ENCODE measurements at regions of chr16 and their contacts with region 1.

Region 1: DNA sequence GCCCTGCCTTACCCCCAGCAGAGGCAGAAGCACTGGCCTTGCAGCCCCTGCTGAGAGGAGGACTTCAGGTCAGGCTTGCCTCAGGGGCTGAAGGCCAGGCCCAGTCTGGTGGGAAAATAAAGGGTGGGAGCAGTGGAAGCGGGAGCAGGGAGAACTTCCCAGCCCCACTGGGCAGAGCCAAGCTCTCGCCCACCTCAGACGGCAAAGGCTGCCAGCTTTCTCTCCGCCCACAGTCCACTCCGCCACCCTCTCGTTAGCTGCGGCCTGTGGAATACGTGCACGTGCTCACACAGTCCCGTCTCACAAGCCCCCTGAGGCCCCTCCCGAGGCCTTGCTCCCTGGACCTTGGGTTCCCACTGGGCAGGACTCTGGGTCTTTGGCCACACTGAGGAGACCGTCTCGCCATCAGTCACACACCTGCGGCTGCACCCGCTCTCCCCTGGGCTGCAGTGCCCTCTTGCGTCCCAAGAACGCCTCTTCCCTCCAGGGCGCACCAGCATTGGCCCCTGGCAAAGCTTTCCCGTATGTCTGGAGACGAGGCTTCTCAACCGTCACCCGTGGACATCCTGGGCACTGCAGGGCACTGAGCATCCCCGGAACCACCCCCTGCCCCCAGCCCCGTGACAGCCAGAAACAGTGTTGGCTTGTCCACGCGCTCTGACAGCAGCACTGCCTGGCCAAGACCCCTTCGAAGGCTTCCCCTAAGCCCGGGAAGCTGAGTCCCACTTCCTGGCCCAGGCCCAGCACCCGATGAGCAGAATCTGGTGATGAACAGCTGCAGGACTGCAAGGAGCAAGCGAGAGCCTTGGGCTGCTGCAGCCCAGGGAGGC is 8.3 kb downstream of the MRPL28 start:
- DNase-seq: peak; percentile 73
- H3K4me3 ChIP-seq: peak overlapping the region in 1 of 3 experiments; percentile 20
- H3K27ac ChIP-seq: no peak overlapping the region
- H3K4me1 ChIP-seq: peaks cover 11% of the 10 kb centered on the region
- H3K27me3 ChIP-seq: no peaks in the 10 kb centered on the region
- CTCF ChIP-seq: peak; percentile 88 to 96

Region 2: GRCh38 chr16:106623-107324 is 255.3 kb before region 1 on chr16:
- CTCF ChIA-PET with region 1: no interaction called
- dilution Hi-C with region 1: no loop called
- in situ Hi-C with region 1: no loop called
- intact Hi-C with region 1: loop called (anchors 1 kb)
- DNase-seq: peak; percentile 53
- H3K4me3 ChIP-seq: no peak overlapping the region
- H3K27ac ChIP-seq: no peak overlapping the region
- H3K4me1 ChIP-seq: peaks cover 12% of the 10 kb centered on the region
- H3K27me3 ChIP-seq: no peaks in the 10 kb centered on the region
- CTCF ChIP-seq: peak; percentile 74 to 81

Region 3: DNA sequence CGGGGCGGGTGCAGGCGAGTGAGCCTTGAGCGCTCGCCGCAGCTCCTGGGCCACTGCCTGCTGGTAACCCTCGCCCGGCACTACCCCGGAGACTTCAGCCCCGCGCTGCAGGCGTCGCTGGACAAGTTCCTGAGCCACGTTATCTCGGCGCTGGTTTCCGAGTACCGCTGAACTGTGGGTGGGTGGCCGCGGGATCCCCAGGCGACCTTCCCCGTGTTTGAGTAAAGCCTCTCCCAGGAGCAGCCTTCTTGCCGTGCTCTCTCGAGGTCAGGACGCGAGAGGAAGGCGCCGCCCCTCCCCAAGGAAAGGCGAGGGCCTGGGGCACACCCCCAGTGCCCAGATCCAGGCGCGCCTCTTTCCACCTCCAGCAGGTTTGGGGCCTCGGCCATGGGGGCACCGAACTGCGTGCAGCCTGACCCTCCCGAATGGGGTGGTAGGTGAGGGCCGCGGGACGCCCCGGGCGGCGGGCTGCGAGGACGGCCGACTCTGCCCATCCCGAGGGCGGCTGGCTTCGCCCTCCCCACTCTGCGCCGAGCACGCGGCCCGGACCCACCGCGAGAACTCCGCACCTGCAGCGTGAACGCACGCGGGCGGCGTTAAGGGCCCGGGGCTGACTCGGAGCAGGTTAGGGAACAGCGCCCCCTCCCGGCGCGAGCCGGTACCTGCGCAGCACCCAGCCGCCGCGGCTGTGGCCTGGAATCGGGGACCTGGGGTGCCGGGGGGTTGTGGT is 181.0 kb before region 1 on chr16:
- CTCF ChIA-PET with region 1: no interaction called
- dilution Hi-C with region 1: no loop called
- in situ Hi-C with region 1: no loop called
- intact Hi-C with region 1: loop called (anchors 2 kb)
- DNase-seq: peak; percentile 57
- H3K4me3 ChIP-seq: peak overlapping the region in 2 of 3 experiments; percentile 20 to 33
- H3K27ac ChIP-seq: no peak overlapping the region
- H3K4me1 ChIP-seq: peaks cover 9% of the 10 kb centered on the region
- H3K27me3 ChIP-seq: peaks cover 7% of the 10 kb centered on the region
- CTCF ChIP-seq: peak; percentile 82 to 95

Region 4: DNA sequence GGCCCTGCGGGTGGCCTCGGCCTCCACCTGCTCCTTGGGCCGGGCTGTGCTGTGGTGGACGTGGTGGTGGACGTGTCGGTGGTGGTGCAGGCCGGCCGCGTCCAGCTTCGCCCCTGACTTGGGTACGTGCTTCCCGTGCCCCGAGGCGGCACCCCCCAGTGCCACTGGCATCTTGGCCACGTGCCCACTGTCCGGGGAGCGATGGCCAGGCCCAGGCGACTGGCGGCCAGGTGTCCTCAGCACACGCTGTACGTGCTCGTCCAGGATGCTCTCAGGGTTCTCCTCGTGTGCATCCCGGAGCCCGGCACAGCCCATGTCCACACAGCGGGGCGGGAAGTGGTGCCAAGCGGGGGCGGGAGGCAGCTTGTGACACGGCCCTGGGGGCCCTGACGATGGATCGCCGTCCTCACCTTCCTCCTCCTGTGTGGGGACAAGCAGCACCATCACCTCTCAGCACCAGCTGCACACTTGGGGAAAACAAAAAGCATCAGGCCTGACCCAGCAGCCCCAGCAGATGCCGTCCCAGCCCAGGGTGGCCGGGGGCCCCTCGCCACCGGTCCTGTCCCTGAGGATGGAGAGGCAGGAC is 64.2 kb before region 1 on chr16:
- CTCF ChIA-PET with region 1: no interaction called
- dilution Hi-C with region 1: loop called (anchors 5 kb)
- in situ Hi-C with region 1: no loop called
- intact Hi-C with region 1: no loop called
- DNase-seq: no peak
- H3K4me3 ChIP-seq: no peak overlapping the region
- H3K27ac ChIP-seq: no peak overlapping the region
- H3K4me1 ChIP-seq: no peaks in the 10 kb centered on the region
- H3K27me3 ChIP-seq: no peaks in the 10 kb centered on the region
- CTCF ChIP-seq: no peak

Region 5: GRCh38 chr16:373848-374627 is 12.0 kb after region 1 on chr16:
- CTCF ChIA-PET with region 1: no interaction called
- dilution Hi-C with region 1: no loop called
- in situ Hi-C with region 1: no loop called
- intact Hi-C with region 1: no loop called
- DNase-seq: no peak
- H3K4me3 ChIP-seq: no peak overlapping the region
- H3K27ac ChIP-seq: no peak overlapping the region
- H3K4me1 ChIP-seq: peaks cover 14% of the 10 kb centered on the region
- H3K27me3 ChIP-seq: no peaks in the 10 kb centered on the region
- CTCF ChIP-seq: no peak

Region 6: GRCh38 chr16:414395-415169 is 52.5 kb after region 1 on chr16:
- CTCF ChIA-PET with region 1: no interaction called
- dilution Hi-C with region 1: loop called (anchors 5 kb)
- in situ Hi-C with region 1: no loop called
- intact Hi-C with region 1: no loop called
- DNase-seq: peak; percentile 52
- H3K4me3 ChIP-seq: no peak overlapping the region
- H3K27ac ChIP-seq: no peak overlapping the region
- H3K4me1 ChIP-seq: peaks cover 7% of the 10 kb centered on the region
- H3K27me3 ChIP-seq: no peaks in the 10 kb centered on the region
- CTCF ChIP-seq: no peak

Region 7: DNA sequence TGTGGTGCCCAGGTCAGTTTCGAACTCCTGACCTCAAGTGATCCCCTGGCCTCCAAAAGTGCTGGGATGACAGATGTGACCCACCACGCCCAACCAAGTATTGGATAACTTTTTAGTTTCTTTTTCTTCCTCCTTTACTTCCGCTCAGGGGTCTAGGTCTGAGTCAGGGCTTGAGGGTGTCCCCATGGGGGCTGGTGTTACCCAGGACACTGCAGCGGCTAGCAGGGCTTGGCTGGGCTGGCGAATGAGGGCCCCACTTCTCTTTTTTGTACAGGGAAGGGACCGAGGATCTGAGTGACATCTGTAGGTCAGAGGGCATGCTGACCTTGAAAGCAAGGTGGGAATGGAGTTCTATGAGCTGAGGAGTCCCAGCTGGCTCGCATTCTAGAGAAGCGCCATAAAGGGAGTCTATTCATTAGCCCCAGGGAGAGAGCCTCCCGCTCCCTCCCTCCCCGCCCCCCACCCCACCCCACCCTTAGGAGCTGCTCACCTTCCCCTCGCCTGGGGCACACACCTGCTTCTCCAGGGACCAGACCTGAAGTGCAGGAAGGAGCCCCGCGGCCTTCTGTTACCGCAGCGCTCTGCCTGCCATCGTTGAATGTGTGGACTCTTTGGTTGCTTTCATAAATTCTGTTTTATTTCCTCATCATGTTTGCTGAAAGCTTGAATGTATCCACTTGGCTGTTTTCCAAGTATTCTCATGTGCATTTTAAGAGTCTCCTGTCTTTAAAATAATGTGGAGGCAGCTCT is 88.5 kb after region 1 on chr16:
- CTCF ChIA-PET with region 1: no interaction called
- dilution Hi-C with region 1: no loop called
- in situ Hi-C with region 1: no loop called
- intact Hi-C with region 1: no loop called
- DNase-seq: no peak
- H3K4me3 ChIP-seq: no peak overlapping the region
- H3K27ac ChIP-seq: no peak overlapping the region
- H3K4me1 ChIP-seq: no peaks in the 10 kb centered on the region
- H3K27me3 ChIP-seq: no peaks in the 10 kb centered on the region
- CTCF ChIP-seq: no peak